Sigmoid colon (tissue), 7 donors: ENCODE measurements at regions of chr22 and their contacts with region 1.

Region 1: DNA sequence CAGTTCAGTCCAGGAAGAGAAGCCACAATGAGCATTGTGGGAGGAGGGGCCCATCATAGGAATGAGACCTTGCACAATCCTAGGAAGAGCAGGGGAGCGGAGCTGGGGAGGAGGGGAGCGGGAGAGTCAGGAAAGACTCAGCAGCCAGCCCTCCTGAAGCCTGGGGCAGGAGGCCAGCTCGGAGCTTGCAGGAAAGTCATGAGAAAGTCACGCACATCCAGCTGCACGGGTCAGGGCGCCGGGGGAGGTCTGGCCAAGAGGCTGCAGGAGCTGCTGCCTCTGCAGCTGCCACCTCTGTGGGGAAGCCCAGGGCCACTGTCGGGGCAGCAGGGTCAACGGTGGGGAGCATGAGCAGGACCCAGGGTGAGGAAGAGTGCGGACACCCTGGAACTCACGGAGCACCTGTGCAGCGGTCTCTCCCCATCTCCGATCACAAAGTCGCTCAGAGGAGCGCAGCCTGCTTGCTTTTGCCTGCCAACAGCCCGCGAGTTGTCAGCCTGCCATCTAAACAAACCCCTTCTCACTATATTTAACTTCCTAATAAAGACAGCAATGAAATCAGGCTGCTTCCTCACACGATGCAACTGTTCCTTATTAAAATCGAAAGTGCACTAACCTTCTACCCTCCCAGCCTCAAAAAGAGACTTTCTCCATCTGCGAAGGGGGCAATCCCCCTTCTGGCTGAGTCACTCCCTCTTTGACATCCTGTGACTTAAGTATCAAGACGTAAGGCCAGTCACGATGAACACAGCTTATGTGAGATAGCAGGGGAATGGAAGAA is 52.9 kb upstream of the RTL6 start:
- DNase-seq: peak; percentile 96
- H3K4me3 ChIP-seq: peak overlapping the region; percentile 17 to 47 (median 43)
- H3K27ac ChIP-seq: peak overlapping the region; percentile 71 to 86 (median 84)
- H3K4me1 ChIP-seq: peaks cover 0 to 17% (median 12%) of the 10 kb centered on the region in 4 donors
- H3K27me3 ChIP-seq: no peaks in the 10 kb centered on the region
- CTCF ChIP-seq: no peak
- EP300 ChIP-seq: peak in 1 of 4 donors; percentile 7
- POLR2A ChIP-seq: no peak

Region 2: DNA sequence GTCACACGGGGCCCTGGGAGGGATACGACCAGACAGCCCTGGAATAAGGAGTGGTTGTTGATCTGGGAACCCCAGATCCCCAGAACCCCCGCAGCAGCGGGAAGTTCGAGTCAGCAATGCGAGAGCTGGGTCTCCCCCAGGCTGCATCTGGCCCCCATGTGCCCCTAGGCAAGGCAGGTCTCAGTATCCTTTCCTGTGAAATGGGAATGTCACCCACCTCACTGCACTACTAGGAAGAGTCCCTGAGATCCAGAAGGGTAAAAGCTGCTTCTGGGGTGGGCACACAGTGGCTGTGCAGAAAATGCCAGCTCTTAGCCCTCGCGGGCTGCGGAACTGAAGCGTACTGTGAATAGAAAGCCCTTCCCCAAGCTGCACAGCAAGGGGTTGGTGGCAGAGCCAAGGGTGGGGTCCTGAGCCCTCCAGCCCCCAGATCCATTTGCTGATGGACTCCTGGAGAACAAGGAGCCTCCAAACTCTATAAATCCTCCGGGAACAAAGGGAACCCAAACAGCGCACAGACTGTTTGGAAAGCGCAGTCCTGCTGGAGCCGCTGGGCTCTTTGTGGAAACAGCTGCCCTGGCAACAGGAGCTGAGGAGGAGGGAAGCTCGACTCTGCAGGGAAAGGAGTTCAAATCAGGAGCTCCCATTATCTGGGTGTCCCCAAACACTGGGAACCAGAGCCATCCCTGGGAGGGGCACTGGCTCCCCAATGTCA is 170.0 kb before region 1 on chr22:
- intact Hi-C with region 1: no loop called
- DNase-seq: peak; percentile 72
- H3K4me3 ChIP-seq: no peak overlapping the region
- H3K27ac ChIP-seq: peak overlapping the region in 2 of 4 donors; percentile 12 to 49
- H3K4me1 ChIP-seq: peaks cover 0 to 21% (median 11%) of the 10 kb centered on the region in 4 donors
- H3K27me3 ChIP-seq: no peaks in the 10 kb centered on the region
- CTCF ChIP-seq: no peak
- EP300 ChIP-seq: no peak
- POLR2A ChIP-seq: no peak

Region 3: GRCh38 chr22:44444341-44445301 is 106.3 kb before region 1 on chr22:
- intact Hi-C with region 1: no loop called
- DNase-seq: peak; percentile 44
- H3K4me3 ChIP-seq: no peak overlapping the region
- H3K27ac ChIP-seq: no peak overlapping the region
- H3K4me1 ChIP-seq: peaks cover 0 to 18% (median 16%) of the 10 kb centered on the region in 4 donors
- H3K27me3 ChIP-seq: no peaks in the 10 kb centered on the region
- CTCF ChIP-seq: no peak
- EP300 ChIP-seq: no peak
- POLR2A ChIP-seq: no peak

Region 4: DNA sequence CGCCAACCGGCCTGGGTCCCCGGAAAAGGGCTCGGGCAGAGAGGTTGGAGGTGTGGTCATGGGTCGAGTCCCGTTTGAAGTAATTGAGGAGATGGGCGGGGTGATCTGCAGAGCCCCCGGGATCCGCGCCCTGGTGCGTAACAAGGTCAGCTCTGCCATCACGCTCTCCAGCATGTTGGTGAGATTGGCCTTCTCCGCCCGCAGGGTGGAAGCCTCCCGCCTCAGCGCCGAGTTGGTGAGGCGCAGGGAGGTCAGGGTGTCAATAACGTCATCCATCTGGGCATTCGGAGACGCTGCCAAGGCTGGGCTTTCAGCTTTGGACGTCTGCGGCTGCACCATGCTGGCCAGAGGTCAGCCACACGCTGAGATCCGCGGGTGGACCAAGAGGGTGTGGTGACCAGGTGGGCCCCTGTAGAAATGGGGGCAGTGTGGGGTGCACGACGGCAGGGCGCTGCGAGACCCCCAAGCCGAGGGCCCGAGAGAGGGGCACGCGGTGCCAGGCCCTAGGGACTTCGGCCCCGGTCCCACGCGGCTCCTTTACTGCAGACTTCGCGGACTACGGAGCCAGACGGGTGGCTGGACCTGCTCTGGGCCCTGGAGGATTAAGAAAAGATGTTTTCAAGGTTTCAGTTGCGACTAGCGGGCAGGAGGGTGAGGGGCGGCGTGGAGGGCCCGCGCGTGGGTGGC is 53.5 kb before region 1 on chr22:
- intact Hi-C with region 1: loop called (anchors 2 kb)
- DNase-seq: peak; percentile 72
- H3K4me3 ChIP-seq: peak overlapping the region; percentile 58 to 94 (median 72)
- H3K27ac ChIP-seq: peak overlapping the region; percentile 83 to 88 (median 83)
- H3K4me1 ChIP-seq: peaks cover 0 to 43% (median 26%) of the 10 kb centered on the region in 4 donors
- H3K27me3 ChIP-seq: no peaks in the 10 kb centered on the region
- CTCF ChIP-seq: no peak
- EP300 ChIP-seq: no peak
- POLR2A ChIP-seq: no peak